Endothelial cell of umbilical vein (primary cell): ENCODE measurements at regions of chr7 and their contacts with region 1.

Region 1: DNA sequence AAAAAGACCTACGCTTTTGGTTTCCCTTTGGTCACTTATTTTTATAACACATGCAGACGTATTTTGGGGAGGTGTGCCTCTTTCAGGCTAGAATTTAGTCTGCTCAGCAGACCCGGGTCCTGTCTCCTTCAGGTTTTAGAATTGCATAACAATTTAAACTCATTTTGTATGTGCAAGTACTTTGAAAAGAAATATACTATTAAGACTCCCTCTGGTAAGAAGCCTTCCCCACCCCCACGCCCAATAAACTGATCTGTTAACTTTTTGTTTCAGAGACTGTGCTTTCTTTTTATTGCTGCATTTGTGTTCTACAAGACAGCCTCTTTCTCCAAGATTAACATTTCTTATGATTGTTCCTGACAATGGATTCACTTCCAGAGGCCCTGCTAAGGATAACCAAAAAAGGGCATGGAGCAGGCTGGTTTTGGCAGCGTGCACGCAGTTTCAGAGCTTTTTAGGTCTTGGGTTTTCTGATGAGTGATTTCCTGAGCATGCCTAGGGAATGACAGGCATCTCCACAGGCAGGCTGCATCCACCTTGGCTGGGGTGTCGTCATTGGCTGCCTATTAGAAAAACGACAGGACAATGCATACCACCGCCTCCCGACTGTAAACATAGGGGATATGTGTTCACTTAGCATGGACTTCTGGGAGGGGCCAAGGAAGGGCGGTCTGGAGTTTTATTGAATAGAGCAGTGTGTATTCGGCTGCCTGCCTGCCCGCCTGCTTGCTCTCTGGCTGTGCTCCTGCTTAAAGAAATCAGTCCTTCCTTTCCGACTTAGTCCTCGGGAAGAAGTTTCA is at the start of gene CALD1:
- DNase-seq: peak; percentile 99
- H3K4me3 ChIP-seq: peak within 1 kb of the TSS; percentile 54 to 100 (median 98)
- H3K27ac ChIP-seq: peak within 1 kb of the TSS; percentile 97
- H3K4me1 ChIP-seq: peaks cover 51% of the 10 kb centered on the region
- H3K27me3 ChIP-seq: no peaks in the 10 kb centered on the region
- CTCF ChIP-seq: no peak
- POLR2A ChIP-seq: peak; percentile 98
- total RNA-seq, gene CALD1: 307 and 313 TPM in 2 replicates

Region 2: DNA sequence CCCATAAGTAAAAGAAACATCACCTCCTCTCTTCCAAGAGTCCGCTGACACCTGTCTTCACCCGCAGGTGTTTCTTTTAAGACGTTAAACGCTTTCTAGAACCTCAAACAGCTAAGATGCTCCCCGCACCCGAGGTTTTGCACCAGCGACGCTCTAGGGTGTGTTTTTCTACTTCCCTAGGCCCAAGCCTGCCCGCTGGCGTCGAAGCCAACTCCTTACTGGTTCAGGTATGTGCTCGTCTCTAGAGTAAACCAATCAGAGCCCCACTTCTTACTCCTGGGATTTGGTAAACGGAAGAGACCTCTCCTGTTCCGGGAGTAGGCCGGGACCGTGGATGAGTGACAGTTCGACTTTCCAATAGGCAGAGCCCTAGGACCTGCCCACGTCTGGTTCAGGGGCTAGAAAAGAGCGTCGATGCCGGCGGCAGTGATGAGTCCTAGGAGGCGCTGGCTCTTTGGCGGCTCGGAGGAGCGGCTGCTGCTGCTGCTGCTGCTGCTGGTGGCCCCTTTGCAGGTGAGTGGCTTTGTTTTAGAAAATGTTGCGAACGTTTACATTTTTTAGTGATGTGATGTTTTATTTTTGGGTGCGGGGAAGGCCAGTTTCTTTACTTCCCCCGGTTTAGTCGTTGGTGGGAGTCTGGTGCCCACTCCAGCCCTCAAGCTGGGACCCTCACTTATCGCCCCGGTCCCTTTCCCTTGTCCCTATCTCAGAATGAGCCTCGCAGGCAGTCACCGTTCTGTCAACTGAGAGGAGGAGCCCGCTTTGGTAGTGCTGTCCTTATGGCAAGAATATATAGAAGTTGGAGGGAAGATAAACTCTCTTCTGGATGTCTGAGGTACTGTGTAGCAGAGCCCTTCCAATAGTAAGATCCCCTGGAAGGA is 132.5 kb before region 1 on chr7 and contains the start of gene BPGM:
- CTCF ChIA-PET with region 1: no interaction called
- POLR2A ChIA-PET with region 1: no interaction called
- dilution Hi-C with region 1: no loop called
- intact Hi-C with region 1: loop called (anchors 1 kb)
- DNase-seq: peak; percentile 100
- H3K4me3 ChIP-seq: peak within 1 kb of the TSS; percentile 78 to 99 (median 97)
- H3K27ac ChIP-seq: peak within 1 kb of the TSS; percentile 81
- H3K4me1 ChIP-seq: peaks cover 11% of the 10 kb centered on the region
- H3K27me3 ChIP-seq: no peaks in the 10 kb centered on the region
- CTCF ChIP-seq: peak in 1 of 2 donors; percentile 36
- POLR2A ChIP-seq: peak; percentile 95
- total RNA-seq, gene BPGM: 28.3 and 44.4 TPM in 2 replicates

Region 3: DNA sequence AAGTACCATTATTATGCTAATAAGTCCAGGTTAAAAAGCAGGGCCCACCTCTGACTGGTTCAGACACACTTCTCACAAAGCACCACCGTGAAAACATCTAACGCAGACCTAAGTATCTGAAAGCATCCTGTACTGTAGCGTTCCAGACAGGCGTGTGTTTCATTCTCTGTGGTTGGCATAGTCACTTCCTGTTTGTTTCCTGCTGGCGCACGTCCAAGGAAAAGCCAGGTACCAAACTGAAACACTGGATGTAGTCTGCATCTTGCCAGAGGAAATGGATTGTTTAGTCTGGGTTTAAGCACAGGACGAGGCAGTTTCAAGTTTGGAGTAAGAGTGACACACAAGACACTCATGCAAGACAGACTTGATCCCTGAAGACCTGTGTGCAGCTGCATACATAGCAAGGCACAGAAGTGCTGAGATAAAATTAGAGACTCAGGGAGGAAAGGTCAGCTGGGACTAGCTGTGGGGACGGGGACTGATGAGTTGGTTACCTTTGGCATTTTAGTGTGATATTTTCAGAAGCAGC is 109.2 kb before region 1 on chr7:
- CTCF ChIA-PET with region 1: no interaction called
- POLR2A ChIA-PET with region 1: no interaction called
- dilution Hi-C with region 1: no loop called
- intact Hi-C with region 1: loop called (anchors 1 kb)
- DNase-seq: peak; percentile 99
- H3K4me3 ChIP-seq: peak overlapping the region in 1 of 3 experiments; percentile 10
- H3K27ac ChIP-seq: peak overlapping the region; percentile 100
- H3K4me1 ChIP-seq: peaks cover 50% of the 10 kb centered on the region
- H3K27me3 ChIP-seq: no peaks in the 10 kb centered on the region
- CTCF ChIP-seq: no peak
- POLR2A ChIP-seq: no peak

Region 4: DNA sequence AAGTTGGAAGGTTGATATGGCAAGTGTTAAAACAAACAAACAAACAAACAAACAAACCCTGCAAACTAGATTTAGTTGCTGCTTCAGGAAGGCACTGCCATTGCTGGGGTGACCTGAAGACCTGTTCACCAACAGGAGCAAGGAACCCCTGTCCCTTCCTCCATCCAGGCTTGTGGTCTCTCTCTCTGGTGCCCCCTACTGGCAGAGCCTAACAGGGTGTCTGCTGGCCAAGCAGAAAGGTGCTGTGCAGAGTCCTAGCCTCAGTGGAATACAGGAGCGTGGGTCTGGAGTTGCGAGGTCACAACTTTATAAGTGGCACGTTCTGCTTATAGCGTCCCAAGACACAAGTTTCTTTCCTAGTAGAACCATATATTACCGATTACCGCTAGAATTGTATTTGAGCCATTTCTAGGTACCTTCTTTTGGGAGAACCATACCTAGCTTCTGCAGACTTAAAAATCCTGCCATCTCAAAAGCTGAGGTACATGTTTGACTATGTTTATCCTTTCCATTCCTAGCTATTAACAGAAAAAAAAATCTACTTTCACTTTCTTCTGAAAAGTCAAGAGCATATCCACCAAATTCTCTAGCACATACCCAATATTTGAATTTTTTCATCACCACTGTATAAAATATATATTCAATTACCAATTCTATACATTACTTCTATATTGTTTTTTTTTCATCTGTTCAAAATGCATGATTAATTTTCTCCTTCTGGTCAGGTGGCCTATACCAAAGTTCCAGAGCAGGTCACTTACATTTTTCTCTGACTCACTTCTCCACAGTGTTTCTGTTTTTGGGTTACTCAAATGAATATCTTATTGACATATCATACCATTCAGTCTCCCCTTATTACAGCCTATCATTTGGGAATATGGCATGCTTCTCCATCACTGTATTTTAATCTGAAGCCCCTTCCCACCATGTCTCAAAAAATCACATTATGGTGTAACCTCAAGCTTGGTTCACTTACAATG is 28.8 kb before region 1 on chr7:
- CTCF ChIA-PET with region 1: interaction called, 4 read pairs
- POLR2A ChIA-PET with region 1: interaction called, 3 read pairs
- dilution Hi-C with region 1: no loop called
- intact Hi-C with region 1: loop called (anchors 2 kb)
- DNase-seq: peak; percentile 51
- H3K4me3 ChIP-seq: no peak overlapping the region
- H3K27ac ChIP-seq: no peak overlapping the region
- H3K4me1 ChIP-seq: no peaks in the 10 kb centered on the region
- H3K27me3 ChIP-seq: no peaks in the 10 kb centered on the region
- CTCF ChIP-seq: peak; percentile 68 to 76
- POLR2A ChIP-seq: no peak

Region 5: DNA sequence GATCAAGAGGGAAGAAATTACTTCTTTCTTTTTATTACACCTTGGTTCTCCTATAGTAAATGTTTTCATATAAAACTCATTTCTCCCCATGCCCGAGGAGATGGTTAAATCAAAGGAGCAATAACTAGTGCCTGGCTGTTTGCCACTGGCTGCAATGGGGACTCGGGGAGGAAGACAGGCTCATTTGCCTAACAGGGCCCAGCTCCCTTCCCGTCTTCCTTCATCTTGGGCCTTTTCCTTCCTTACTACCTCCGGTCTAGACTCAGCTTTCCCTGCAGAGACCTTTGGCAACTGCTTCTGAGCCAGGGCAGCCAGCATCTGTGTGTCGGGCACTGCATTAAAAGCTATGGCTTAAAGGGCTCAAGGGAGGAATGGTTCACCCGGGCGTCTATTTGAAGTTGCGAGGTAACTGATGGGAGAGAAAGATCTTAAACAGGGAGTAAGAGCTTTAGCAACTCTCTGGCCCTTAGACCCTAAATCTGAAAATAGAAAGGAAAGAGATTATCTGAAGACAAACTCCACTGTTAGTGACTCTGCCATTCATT is 63.8 kb after region 1 on chr7:
- CTCF ChIA-PET with region 1: interaction called, 3 read pairs
- POLR2A ChIA-PET with region 1: interaction called, 7 read pairs
- dilution Hi-C with region 1: no loop called
- intact Hi-C with region 1: loop called (anchors 1 kb)
- DNase-seq: peak; percentile 88
- H3K4me3 ChIP-seq: peak overlapping the region in 1 of 3 experiments; percentile 14
- H3K27ac ChIP-seq: peak overlapping the region; percentile 9
- H3K4me1 ChIP-seq: peaks cover 32% of the 10 kb centered on the region
- H3K27me3 ChIP-seq: no peaks in the 10 kb centered on the region
- CTCF ChIP-seq: no peak
- POLR2A ChIP-seq: no peak

Region 6: GRCh38 chr7:134891262-134891695 is 112.1 kb after region 1 on chr7:
- CTCF ChIA-PET with region 1: no interaction called
- POLR2A ChIA-PET with region 1: no interaction called
- dilution Hi-C with region 1: no loop called
- intact Hi-C with region 1: loop called (anchors 2 kb)
- DNase-seq: no peak
- H3K4me3 ChIP-seq: no peak overlapping the region
- H3K27ac ChIP-seq: no peak overlapping the region
- H3K4me1 ChIP-seq: peaks cover 18% of the 10 kb centered on the region
- H3K27me3 ChIP-seq: no peaks in the 10 kb centered on the region
- CTCF ChIP-seq: no peak
- POLR2A ChIP-seq: no peak

Region 7: DNA sequence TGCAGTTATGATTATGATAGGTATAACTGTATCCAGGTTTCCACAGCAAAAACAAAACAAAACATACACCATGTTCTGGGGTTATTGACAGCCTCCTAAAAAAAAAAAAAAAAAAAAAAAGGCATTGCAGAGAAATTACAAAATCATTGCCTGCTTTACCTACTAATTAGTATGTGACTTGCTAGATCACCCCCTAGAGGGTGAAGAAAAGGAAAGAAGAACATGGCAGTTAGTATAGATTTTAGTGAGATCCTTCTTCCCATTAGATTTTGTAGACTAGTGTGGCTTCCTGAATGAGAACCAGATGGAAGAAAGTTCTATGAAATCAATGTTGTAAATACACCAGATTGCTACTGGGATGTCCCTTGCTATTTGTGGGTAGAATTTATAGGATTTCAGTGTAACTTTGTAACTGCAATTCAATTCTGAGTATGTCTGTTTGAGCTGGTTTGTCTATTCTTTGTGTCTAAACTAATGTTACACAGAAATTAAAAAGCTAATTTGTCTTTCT is 183.2 kb after region 1 on chr7:
- CTCF ChIA-PET with region 1: no interaction called
- POLR2A ChIA-PET with region 1: no interaction called
- dilution Hi-C with region 1: no loop called
- intact Hi-C with region 1: no loop called
- DNase-seq: no peak
- H3K4me3 ChIP-seq: no peak overlapping the region
- H3K27ac ChIP-seq: no peak overlapping the region
- H3K4me1 ChIP-seq: no peaks in the 10 kb centered on the region
- H3K27me3 ChIP-seq: no peaks in the 10 kb centered on the region
- CTCF ChIP-seq: no peak
- POLR2A ChIP-seq: no peak

Region 8: DNA sequence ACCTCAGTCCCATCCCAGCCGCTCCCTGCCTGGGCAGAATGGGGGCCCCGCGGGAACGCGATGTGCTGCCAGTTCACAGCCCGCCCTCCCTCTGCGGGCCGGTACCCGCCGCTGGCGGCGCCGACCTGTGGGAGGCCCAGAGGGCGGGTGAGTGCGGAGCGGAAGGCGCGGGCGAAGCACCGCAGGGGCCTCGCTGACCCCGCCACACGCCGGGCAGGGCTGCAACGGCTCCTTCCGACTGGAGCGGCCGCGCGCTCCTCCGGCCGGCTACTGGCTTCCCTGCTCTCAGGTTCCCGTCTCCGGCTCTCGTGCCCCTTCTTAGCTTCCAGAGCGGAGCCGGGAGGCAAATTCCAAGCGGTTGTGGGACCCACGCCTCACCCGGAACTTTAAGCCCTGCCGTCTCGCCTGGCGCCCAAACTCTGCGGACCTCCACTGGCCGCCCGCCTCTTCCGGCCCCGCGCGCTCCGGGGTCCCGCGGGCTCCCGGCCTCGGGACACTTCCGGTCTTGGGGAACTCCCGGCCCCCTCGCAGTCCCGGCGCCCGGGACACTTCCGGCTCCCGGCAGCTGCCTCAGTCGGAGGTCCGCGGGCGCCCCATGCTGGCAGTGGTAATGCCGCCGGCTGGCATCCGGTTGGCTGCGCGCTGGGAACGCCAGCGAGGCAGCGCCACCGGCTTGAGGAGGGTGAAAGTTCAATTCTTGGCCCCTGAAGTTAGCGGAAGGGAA is 391.3 kb after region 1 on chr7 and contains the start of gene CYREN:
- CTCF ChIA-PET with region 1: no interaction called
- POLR2A ChIA-PET with region 1: no interaction called
- dilution Hi-C with region 1: no loop called
- intact Hi-C with region 1: loop called (anchors 5 kb)
- DNase-seq: peak; percentile 92
- H3K4me3 ChIP-seq: peak within 1 kb of the TSS; percentile 47 to 75 (median 66)
- H3K27ac ChIP-seq: peak within 1 kb of the TSS; percentile 63
- H3K4me1 ChIP-seq: peaks cover 23% of the 10 kb centered on the region
- H3K27me3 ChIP-seq: no peaks in the 10 kb centered on the region
- CTCF ChIP-seq: peak; percentile 69 to 78
- POLR2A ChIP-seq: peak; percentile 13
- total RNA-seq, gene CYREN: 26.8 and 30.8 TPM in 2 replicates